ENCODE measurements at regions of chr20 and their contacts with region 1.

Region 1: DNA sequence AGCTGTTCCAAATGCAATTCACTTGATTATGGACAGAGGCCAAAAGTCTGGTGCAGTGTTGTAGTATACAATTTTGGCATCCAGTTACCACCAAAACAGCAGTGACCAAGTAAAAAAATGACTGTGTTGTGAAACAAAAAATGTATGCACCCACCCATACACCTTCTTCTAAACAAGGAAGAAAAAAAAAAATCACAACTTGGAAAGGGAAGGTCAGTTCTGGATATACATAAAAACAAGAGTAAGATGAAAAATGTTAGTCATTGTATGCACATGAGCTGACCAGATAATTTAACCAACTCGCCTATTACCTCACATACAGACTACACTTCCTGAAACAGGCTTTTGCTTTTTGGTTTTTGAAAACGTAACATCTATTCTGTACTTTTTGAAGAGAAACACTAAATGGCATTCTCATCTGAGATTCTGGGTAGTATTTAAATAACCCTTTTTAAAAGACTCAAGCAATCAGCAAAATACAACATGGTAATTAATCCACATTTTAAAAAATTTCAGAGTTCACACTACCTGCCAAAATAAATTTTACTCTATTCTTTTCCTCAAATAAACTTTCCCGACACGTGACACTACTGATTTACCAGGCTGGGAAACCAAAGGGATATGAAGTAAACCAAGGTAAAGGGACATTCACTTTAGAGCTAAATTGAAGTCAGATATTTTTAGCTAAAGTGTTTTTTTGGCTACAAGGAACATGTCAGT is 141.6 kb upstream of the SHLD1 start:
- DNase-seq: peak; percentile 32
- H3K4me3 ChIP-seq: peak overlapping the region; percentile 22 to 81 (median 47)
- H3K27ac ChIP-seq: peak overlapping the region; percentile 93
- H3K4me1 ChIP-seq: peaks cover 28% of the 10 kb centered on the region
- H3K27me3 ChIP-seq: no peaks in the 10 kb centered on the region
- CTCF ChIP-seq: no peak

Region 2: GRCh38 chr20:5569021-5569420 is 39.6 kb before region 1 on chr20:
- CTCF ChIA-PET with region 1: no interaction called
- dilution Hi-C with region 1: no loop called
- in situ Hi-C with region 1: no loop called
- intact Hi-C with region 1: loop called (anchors 5 kb)
- DNase-seq: peak; percentile 27
- H3K4me3 ChIP-seq: no peak overlapping the region
- H3K27ac ChIP-seq: no peak overlapping the region
- H3K4me1 ChIP-seq: no peaks in the 10 kb centered on the region
- H3K27me3 ChIP-seq: no peaks in the 10 kb centered on the region
- CTCF ChIP-seq: peak; percentile 22 to 24

Region 3: DNA sequence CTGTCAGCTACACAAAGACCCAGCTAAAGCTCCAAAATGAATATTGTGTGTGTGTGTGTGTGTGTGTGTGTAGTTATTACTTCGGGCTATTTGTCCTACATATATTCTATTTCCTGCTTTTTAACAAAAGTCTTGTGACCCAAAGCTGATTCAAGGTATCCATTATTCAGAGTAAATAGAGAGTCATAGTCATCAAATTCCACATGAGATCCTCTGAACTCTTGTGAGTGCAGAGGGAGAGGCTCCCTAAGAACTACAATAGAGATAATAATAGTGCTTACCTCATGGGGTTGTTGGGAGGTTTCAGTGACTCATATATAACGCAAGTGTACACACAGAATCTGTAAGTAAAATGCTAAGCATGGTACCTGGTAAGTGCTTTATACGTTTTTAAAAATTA is 46.0 kb after region 1 on chr20:
- CTCF ChIA-PET with region 1: no interaction called
- dilution Hi-C with region 1: no loop called
- in situ Hi-C with region 1: no loop called
- intact Hi-C with region 1: no loop called
- DNase-seq: peak; percentile 98
- H3K4me3 ChIP-seq: no peak overlapping the region
- H3K27ac ChIP-seq: peak overlapping the region; percentile 85
- H3K4me1 ChIP-seq: peaks cover 53% of the 10 kb centered on the region
- H3K27me3 ChIP-seq: no peaks in the 10 kb centered on the region
- CTCF ChIP-seq: no peak